Activated CD4-positive, alpha-beta T cell treated with anti-CD3 and anti-CD28 coated beads, Interleukin-2, amount 10 ng/mL, durations not matched to agents 24 days and 14 days (primary cell): ENCODE measurements at regions of chr7 and their contacts with region 1.

Region 1: GRCh38 chr7:24921362-24921679 is 58.7 kb downstream of the OSBPL3 start:
- DNase-seq: peak; percentile 79
- H3K4me3 Mint-ChIP-seq: peak overlapping the region; percentile 64
- H3K27ac Mint-ChIP-seq: peak overlapping the region; percentile 92
- H3K4me1 Mint-ChIP-seq: peaks cover 88% of the 10 kb centered on the region
- H3K27me3 Mint-ChIP-seq: no peaks in the 10 kb centered on the region

Region 2: DNA sequence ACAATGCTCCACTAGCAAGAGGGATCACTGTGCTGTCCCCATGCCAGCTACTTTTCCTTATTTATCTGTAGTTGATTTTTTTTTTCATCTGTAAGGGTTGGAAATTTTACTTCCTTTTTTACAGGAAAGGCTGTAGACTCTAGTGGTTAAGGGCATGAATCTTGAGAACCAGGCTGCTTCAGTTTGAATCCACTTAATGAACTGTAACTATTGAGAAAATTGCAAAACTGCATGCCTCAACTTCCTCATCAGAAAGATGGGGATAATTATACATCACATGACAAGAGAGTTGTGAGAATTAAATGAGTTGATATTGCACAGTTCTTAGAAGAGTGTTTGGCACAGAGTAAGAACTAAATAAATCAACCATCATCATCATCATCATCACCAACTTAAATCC is 57.7 kb before region 1 on chr7:
- intact Hi-C with region 1: loop called (anchors 2 kb)
- DNase-seq: no peak
- H3K4me3 Mint-ChIP-seq: no peak overlapping the region
- H3K27ac Mint-ChIP-seq: no peak overlapping the region
- H3K4me1 Mint-ChIP-seq: peaks cover 31% of the 10 kb centered on the region
- H3K27me3 Mint-ChIP-seq: no peaks in the 10 kb centered on the region

Region 3: DNA sequence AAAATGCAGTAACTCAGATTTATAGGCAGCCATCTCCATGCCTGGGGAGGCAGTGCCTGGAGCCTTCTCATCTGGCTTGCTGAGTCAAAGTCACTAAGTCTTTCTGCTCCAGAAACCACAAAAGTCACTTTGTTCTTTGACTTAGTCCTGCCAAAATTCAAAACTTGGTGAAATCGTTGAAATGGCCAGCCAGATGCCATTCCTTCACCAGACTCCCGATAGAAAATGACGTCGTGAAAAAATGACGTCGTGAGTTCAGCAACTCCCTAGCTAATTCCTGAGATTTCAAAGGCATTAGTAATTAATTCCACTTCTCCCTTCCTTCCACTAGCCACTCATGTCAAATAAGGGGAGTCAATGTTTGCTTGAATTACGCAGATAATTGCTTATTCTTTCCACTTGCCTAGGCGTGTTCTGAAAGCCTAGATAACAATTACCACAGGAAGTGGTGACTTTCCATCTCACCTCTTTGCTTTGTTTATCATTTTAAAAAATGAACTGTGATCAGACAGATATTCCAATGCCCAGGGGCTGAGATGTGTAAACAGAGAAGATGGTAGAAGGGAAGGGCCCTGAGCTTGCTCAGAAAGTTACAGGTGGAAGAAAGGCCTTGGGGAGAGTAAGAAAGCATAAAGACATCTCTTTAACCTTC is 107.2 kb after region 1 on chr7:
- intact Hi-C with region 1: loop called (anchors 2 kb)
- DNase-seq: peak; percentile 82
- H3K4me3 Mint-ChIP-seq: peak overlapping the region; percentile 48
- H3K27ac Mint-ChIP-seq: peak overlapping the region; percentile 87
- H3K4me1 Mint-ChIP-seq: peaks cover 45% of the 10 kb centered on the region
- H3K27me3 Mint-ChIP-seq: peaks cover 10% of the 10 kb centered on the region